ENCODE measurements at regions of chr4 and their contacts with region 1.

Region 1: DNA sequence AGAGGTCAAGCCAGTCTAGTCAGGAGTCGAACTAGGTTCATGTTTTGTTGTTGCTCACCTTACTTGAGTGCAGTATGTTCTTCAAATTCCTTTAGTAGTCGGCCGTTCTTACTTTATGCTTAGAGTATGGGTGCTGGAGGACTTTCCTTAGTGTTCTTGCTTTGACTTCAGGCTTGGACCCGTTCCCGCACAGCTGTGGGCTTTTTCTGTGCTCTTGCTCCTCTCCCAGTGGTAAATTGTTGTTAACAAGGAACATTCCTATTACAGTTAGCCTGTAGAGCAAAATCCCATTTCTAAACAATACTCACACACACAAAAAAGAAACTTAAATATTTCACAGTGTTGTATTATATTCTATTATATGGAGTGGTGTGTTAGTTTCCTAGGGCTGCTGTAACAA is 113.5 kb downstream of the RAP1GDS1 start:
- DNase-seq: no peak
- ATAC-seq: no peak
- H3K4me3 ChIP-seq: no peak overlapping the region
- H3K4me3 Mint-ChIP-seq: no peak overlapping the region
- H3K27ac ChIP-seq: no peak overlapping the region
- H3K27ac Mint-ChIP-seq: no peak overlapping the region
- H3K4me1 ChIP-seq: no peaks in the 10 kb centered on the region
- H3K4me1 Mint-ChIP-seq: peaks cover 9% of the 10 kb centered on the region
- H3K27me3 ChIP-seq: no peaks in the 10 kb centered on the region
- H3K27me3 Mint-ChIP-seq: no peaks in the 10 kb centered on the region
- CTCF ChIP-seq: no peak

Region 2: DNA sequence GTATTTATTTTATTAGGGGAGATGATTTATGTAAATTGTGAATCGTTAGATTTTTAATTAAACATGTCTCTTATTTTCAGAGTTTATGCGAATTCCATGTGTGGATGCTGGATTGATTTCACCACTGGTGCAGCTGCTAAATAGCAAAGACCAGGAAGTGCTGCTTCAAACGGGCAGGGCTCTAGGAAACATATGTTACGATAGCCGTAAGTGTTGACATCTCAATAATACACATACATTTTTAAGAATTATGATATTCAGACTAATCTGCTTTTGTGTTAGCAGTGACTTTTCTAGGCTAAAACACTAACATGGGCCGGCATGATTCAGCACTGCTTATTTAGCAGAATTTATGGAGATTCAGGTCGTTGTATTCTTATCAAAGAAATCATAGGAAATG is 22.2 kb before region 1 on chr4:
- CTCF ChIA-PET with region 1: no interaction called
- POLR2A ChIA-PET with region 1: no interaction called
- intact Hi-C with region 1: loop called in 1 of 2 experiments (anchors 1 kb)
- DNase-seq: no peak
- ATAC-seq: no peak
- H3K4me3 ChIP-seq: no peak overlapping the region
- H3K4me3 Mint-ChIP-seq: no peak overlapping the region
- H3K27ac ChIP-seq: no peak overlapping the region
- H3K27ac Mint-ChIP-seq: no peak overlapping the region
- H3K4me1 ChIP-seq: no peaks in the 10 kb centered on the region
- H3K4me1 Mint-ChIP-seq: peaks cover 21% of the 10 kb centered on the region
- H3K27me3 ChIP-seq: no peaks in the 10 kb centered on the region
- H3K27me3 Mint-ChIP-seq: no peaks in the 10 kb centered on the region
- CTCF ChIP-seq: no peak

Region 3: GRCh38 chr4:98421111-98421510 is 46.5 kb after region 1 on chr4:
- CTCF ChIA-PET with region 1: no interaction called
- POLR2A ChIA-PET with region 1: no interaction called
- intact Hi-C with region 1: no loop called
- DNase-seq: no peak
- ATAC-seq: no peak
- H3K4me3 ChIP-seq: no peak overlapping the region
- H3K4me3 Mint-ChIP-seq: no peak overlapping the region
- H3K27ac ChIP-seq: no peak overlapping the region
- H3K27ac Mint-ChIP-seq: no peak overlapping the region
- H3K4me1 ChIP-seq: no peaks in the 10 kb centered on the region
- H3K4me1 Mint-ChIP-seq: peaks cover 11% of the 10 kb centered on the region
- H3K27me3 ChIP-seq: no peaks in the 10 kb centered on the region
- H3K27me3 Mint-ChIP-seq: no peaks in the 10 kb centered on the region
- CTCF ChIP-seq: no peak

Measured in CD4-positive, alpha-beta T cell (primary cell).